ENCODE measurements at regions of chr9 and their contacts with region 1.

Region 1: GRCh38 chr9:5832543-5833529 is at the start of gene ERMP1:
- DNase-seq: peak; percentile 89
- CTCF ChIP-seq: peak; percentile 97

Region 2: GRCh38 chr9:5326893-5327548 is 505.8 kb before region 1 on chr9:
- CTCF ChIA-PET with region 1: no interaction called
- POLR2A ChIA-PET with region 1: no interaction called
- DNase-seq: no peak
- CTCF ChIP-seq: no peak

Region 3: DNA sequence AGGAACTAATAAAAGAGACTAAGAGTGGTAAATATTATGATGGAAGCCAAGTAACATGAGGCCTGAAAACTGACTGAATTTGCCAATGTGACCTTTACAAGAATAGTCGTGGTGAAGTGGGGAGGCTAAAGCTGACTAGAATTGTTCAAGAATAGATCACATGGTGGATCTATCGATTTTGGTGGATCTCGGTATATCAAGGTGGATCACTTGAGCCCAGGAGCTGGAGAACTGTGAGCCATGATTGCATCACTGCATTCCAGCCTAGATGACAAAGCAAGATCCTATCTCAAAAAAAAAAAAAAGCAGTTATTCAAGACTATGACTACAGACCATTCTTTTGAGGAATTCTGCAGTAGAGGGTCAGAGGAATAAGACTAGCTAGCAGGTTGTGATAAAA is 15.0 kb before region 1 on chr9:
- CTCF ChIA-PET with region 1: interaction called, 75 read pairs
- POLR2A ChIA-PET with region 1: no interaction called
- DNase-seq: no peak
- CTCF ChIP-seq: no peak

Region 4: DNA sequence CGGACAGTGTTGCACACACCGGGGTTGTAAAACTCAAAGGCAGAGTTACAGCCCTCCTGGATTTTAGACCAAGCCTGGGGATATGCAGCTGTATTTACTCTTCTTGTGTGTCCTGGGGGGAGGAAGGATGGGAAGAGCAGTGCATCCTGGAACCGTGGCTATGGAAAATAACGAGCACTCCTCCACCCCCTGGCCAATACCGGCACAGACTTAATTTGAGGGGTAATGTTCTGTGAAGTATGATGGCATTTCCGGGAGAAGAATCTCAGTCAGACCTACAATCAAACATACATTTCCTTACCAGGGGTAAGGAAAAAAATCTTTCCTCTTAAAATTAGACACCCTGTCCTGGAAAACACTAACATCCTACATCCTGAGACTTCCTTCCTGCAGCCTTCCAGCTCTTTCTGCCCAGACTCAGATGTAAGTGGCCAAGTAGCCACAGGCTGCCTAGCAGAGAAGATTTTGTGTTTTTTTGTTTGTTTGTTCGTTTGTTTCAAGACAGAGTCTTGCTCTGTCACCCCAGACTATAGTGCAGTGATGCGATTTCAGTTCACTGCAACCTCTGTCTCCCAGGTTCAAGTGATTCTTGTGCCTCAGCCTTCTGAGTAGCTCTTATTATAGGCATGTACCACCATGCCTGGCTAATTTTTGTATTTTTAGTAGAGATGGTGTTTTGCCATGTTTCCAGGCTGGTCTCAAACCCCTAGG is 11.1 kb after region 1 on chr9:
- CTCF ChIA-PET with region 1: interaction called, 44 read pairs
- POLR2A ChIA-PET with region 1: no interaction called
- DNase-seq: no peak
- CTCF ChIP-seq: no peak

Region 5: DNA sequence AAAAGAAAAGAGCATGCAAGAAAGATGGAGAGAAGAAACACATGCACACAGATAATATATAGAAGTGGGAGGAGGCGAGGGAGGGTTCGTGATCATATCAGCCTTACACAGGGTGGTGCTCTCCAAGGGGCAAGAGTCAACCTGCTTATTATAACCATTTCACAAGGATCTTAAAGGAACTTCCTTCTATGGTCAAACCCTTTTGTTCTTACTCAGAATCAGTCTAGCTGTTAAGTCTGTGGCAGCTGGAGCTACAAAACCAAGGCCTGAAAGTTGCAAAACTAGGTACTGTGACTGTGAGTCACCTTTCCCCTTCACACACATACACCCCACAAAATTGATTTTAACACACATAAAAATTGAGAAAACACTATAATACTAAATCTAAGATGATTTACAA is 18.6 kb after region 1 on chr9:
- CTCF ChIA-PET with region 1: interaction called, 27 read pairs
- POLR2A ChIA-PET with region 1: no interaction called
- DNase-seq: peak; percentile 78
- CTCF ChIP-seq: no peak

Region 6: DNA sequence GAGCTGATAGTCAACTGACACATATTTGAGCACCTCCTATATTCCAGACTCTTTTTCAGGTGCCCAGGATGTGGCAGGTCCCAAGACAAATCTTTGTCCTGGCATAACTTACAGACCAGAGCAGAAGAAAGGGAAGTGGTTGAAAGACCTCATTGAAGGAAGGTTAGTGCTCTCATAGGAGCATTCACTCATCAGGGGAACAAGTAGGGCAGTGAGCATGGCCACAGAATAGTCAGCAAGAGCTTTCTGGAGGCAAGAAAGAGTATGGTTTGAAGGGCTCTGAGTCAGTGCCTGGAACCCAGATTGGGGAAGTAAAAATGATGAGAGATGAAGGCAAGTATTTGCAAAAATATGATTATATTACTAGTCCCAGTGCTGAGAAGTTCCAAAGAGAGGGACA is 25.1 kb after region 1 on chr9:
- CTCF ChIA-PET with region 1: interaction called, 24 read pairs
- POLR2A ChIA-PET with region 1: no interaction called
- DNase-seq: no peak
- CTCF ChIP-seq: no peak

Region 7: DNA sequence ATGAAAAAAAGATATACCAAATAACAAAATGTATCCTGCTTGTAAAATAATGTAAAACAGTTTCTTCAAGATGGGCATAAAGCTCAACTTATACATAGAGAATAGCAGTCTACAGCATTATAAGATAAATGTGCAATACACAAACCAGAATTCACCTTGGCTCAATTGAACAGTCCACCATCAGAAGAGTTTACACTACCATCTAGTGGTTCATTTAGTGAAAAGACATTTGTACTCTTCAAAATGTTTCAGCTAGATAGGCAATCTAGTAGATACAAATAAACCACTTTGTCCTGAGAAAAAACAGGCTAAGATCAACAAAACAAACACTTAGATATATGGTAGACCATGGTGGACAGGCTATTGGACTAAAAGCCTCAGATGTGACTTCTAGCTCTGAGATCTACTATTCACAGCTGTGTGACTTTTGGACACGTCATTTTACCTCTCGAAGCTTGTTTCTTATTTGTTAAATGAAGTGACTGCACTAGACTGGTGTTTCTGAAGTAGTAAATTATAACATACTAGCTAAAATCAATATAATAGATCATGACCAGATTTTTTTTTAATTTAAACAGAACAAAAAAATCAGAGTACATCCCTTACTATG is 473.2 kb after region 1 on chr9:
- CTCF ChIA-PET with region 1: interaction called, 11 read pairs
- POLR2A ChIA-PET with region 1: no interaction called
- DNase-seq: peak; percentile 42
- CTCF ChIP-seq: peak; percentile 50

Region 8: GRCh38 chr9:6833518-6834192 is 1000.8 kb after region 1 on chr9:
- CTCF ChIA-PET with region 1: no interaction called
- POLR2A ChIA-PET with region 1: no interaction called
- DNase-seq: no peak
- CTCF ChIP-seq: no peak